ENCODE measurements at regions of chr2 and their contacts with region 1.

Region 1: GRCh38 chr2:237512774-237513466 is 25.9 kb downstream of the MLPH start:
- DNase-seq: peak; percentile 63 to 69 (median 65)
- H3K4me3 ChIP-seq: no peak overlapping the region
- H3K4me3 Mint-ChIP-seq: no peak overlapping the region
- H3K27ac ChIP-seq: no peak overlapping the region
- H3K27ac Mint-ChIP-seq: peak overlapping the region in 1 of 7 donors; percentile 70
- H3K4me1 ChIP-seq: no peaks in the 10 kb centered on the region
- H3K4me1 Mint-ChIP-seq: no peaks in the 10 kb centered on the region
- H3K27me3 ChIP-seq: no peaks in the 10 kb centered on the region
- H3K27me3 Mint-ChIP-seq: peaks cover 9 to 10% (median 10%) of the 10 kb centered on the region in 3 donors
- CTCF ChIP-seq: peak; percentile 86

Region 2: DNA sequence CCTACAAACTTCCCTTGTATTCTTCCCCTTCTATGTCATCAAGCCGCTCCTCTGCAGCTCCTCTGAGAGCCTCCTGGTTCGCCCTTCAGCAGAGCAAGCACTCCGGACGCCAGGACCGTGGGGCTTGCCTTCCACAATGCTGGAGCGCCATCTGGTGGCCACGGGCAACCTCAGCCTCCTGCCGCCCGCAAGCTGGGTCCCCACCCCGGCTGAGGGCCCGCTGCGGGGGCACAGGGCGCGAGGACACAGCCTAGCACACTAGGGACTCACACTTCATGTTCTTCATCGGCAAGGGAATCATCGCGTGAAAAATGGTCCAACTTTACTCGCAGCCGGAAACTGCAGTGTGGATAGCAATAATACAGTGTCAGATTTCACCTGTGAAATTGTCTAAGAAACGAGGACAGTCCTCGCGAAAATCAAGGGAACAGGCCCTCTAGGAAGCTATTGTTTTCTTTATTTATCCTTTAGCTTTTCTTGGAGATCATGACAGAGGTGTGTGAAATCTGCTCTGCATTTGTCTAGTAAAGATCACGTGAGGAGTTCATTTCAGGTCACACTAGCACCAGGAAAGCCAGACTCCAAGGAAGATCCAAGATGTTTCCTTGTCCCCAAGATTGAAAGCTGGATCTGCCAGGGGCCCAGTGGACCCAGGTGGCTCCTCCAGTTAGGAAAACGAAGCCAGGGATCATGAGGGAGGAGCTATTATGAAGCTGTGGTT is 59.3 kb after region 1 on chr2:
- intact Hi-C with region 1: loop called (anchors 1 to 2 kb)
- DNase-seq: peak; percentile 77 to 84 (median 79)
- H3K4me3 ChIP-seq: no peak overlapping the region
- H3K4me3 Mint-ChIP-seq: no peak overlapping the region
- H3K27ac ChIP-seq: no peak overlapping the region
- H3K27ac Mint-ChIP-seq: no peak overlapping the region
- H3K4me1 ChIP-seq: no peaks in the 10 kb centered on the region
- H3K4me1 Mint-ChIP-seq: peaks cover 6% of the 10 kb centered on the region
- H3K27me3 ChIP-seq: no peaks in the 10 kb centered on the region
- H3K27me3 Mint-ChIP-seq: peaks cover 0 to 9% (median 1%) of the 10 kb centered on the region in 3 donors
- CTCF ChIP-seq: peak; percentile 98

Region 3: GRCh38 chr2:237774802-237775553 is 262.1 kb after region 1 on chr2:
- intact Hi-C with region 1: loop called in 1 of 2 experiments (anchors 10 kb)
- DNase-seq: peak; percentile 21 to 45 (median 44)
- H3K4me3 ChIP-seq: no peak overlapping the region
- H3K4me3 Mint-ChIP-seq: no peak overlapping the region
- H3K27ac ChIP-seq: no peak overlapping the region
- H3K27ac Mint-ChIP-seq: peak overlapping the region in 4 of 7 donors; percentile 26 to 72 (median 58)
- H3K4me1 ChIP-seq: no peaks in the 10 kb centered on the region
- H3K4me1 Mint-ChIP-seq: no peaks in the 10 kb centered on the region
- H3K27me3 ChIP-seq: no peaks in the 10 kb centered on the region
- H3K27me3 Mint-ChIP-seq: no peaks in the 10 kb centered on the region
- CTCF ChIP-seq: peak; percentile 75

Region 4: DNA sequence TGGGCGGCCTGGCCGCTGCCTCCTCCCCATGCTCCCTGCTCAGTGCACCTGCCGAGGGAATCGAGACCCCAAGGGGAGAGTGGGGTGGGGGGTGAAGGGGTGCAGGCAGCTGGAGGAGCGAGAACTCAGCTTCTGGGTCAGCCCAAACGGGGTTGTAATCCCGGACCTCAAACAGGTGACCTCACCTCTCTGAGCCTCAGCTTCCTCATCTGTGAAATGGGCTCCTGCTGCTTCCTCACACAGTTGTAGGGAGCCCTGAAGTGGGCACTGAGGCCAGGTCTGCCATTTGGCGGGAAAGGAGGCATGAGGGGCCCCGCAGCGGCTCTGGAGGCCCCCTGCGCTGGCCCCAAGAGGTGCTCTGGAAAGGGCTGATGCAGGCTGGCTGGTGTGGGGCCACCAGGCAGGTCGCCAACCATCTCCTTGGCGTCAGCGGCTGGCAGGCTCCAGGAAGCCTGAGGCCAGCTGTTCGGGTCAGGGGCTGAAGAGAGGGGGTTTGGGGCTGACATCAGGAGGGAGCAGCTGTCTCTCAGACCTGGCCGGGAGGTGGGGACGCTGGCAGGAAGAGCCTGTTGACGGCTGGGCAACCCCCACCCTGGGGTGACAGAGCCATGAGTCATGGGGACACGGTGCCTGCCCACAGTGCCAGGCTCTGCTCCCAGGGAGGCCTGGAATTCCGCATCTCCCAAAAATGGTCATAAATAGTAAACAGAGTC is 630.5 kb after region 1 on chr2:
- intact Hi-C with region 1: no loop called
- DNase-seq: peak in 2 of 3 donors; percentile 8 to 61
- H3K4me3 ChIP-seq: no peak overlapping the region
- H3K4me3 Mint-ChIP-seq: no peak overlapping the region
- H3K27ac ChIP-seq: no peak overlapping the region
- H3K27ac Mint-ChIP-seq: peak overlapping the region in 1 of 7 donors; percentile 20
- H3K4me1 ChIP-seq: peaks cover 23 to 33% of the 10 kb centered on the region in 2 donors
- H3K4me1 Mint-ChIP-seq: peaks cover 33% of the 10 kb centered on the region
- H3K27me3 ChIP-seq: no peaks in the 10 kb centered on the region
- H3K27me3 Mint-ChIP-seq: peaks cover 0 to 3% (median 0%) of the 10 kb centered on the region in 3 donors
- CTCF ChIP-seq: no peak

Measured in CD14-positive monocyte (primary cell).